Endothelial cell of umbilical vein (primary cell): ENCODE measurements at regions of chr20 and their contacts with region 1.

Region 1: GRCh38 chr20:53594068-53595017 is 704 bp upstream of the ZNF217 start:
- DNase-seq: peak; percentile 84
- H3K4me3 ChIP-seq: peak overlapping the region; percentile 82 to 94 (median 93)
- H3K27ac ChIP-seq: peak overlapping the region; percentile 82
- H3K4me1 ChIP-seq: peaks cover 42% of the 10 kb centered on the region
- H3K27me3 ChIP-seq: no peaks in the 10 kb centered on the region
- CTCF ChIP-seq: no peak
- POLR2A ChIP-seq: no peak

Region 2: GRCh38 chr20:53623454-53624211 is 29.3 kb after region 1 on chr20:
- CTCF ChIA-PET with region 1: interaction called, 9 read pairs
- POLR2A ChIA-PET with region 1: interaction called, 27 read pairs
- dilution Hi-C with region 1: no loop called
- intact Hi-C with region 1: loop called (anchors 1 kb)
- DNase-seq: peak; percentile 85
- H3K4me3 ChIP-seq: peak overlapping the region in 1 of 3 experiments; percentile 43
- H3K27ac ChIP-seq: peak overlapping the region; percentile 92
- H3K4me1 ChIP-seq: peaks cover 26% of the 10 kb centered on the region
- H3K27me3 ChIP-seq: no peaks in the 10 kb centered on the region
- CTCF ChIP-seq: no peak
- POLR2A ChIP-seq: no peak

Region 3: GRCh38 chr20:53660078-53660909 is 66.0 kb after region 1 on chr20:
- CTCF ChIA-PET with region 1: no interaction called
- POLR2A ChIA-PET with region 1: interaction called, 6 read pairs
- dilution Hi-C with region 1: no loop called
- intact Hi-C with region 1: loop called (anchors 5 kb)
- DNase-seq: peak; percentile 22
- H3K4me3 ChIP-seq: peak overlapping the region; percentile 10 to 52 (median 13)
- H3K27ac ChIP-seq: no peak overlapping the region
- H3K4me1 ChIP-seq: peaks cover 5% of the 10 kb centered on the region
- H3K27me3 ChIP-seq: no peaks in the 10 kb centered on the region
- CTCF ChIP-seq: no peak
- POLR2A ChIP-seq: no peak

Region 4: GRCh38 chr20:53869466-53870258 is 275.3 kb after region 1 on chr20:
- CTCF ChIA-PET with region 1: interaction called, 5 read pairs
- POLR2A ChIA-PET with region 1: interaction called, 3 read pairs
- dilution Hi-C with region 1: no loop called
- intact Hi-C with region 1: loop called (anchors 5 kb)
- DNase-seq: peak; percentile 82
- H3K4me3 ChIP-seq: no peak overlapping the region
- H3K27ac ChIP-seq: no peak overlapping the region
- H3K4me1 ChIP-seq: peaks cover 22% of the 10 kb centered on the region
- H3K27me3 ChIP-seq: no peaks in the 10 kb centered on the region
- CTCF ChIP-seq: peak; percentile 74 to 77
- POLR2A ChIP-seq: no peak